ENCODE measurements at regions of chr5 and their contacts with region 1.

Region 1: DNA sequence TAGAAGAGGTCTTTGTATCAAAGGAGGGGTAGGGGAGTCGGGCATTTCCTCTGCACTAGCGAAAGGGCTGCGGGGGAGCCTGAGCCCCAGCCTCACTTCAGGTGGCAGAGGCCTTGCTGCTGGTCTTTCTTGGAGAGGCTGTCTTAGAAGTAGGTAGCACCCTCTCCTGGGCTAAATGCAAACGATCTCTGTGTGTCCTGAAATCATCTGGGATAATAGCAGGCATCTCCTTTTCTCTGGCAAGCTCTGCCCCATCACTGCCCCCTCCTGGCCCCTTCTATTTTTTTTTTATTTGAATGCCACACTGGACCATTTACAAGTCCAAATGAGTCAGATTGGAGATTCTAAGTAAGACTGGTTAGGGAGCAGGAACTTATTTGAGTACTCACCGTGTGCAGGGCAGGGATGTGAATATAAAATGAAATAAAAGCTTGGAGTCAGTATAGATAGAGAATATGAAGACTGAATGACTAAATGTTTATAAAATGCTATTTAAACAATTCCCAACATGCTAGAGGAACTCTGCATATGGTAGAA is 137.1 kb downstream of the FGF1 start:
- DNase-seq: peak; percentile 88
- ATAC-seq: peak; percentile 96
- H3K4me3 ChIP-seq: no peak overlapping the region
- H3K27ac ChIP-seq: no peak overlapping the region
- H3K4me1 ChIP-seq: peaks cover 42% of the 10 kb centered on the region
- H3K27me3 ChIP-seq: no peaks in the 10 kb centered on the region
- CTCF ChIP-seq: peak; percentile 91
- EP300 ChIP-seq: 0 out of 4 replicates have a peak, but pooled peaks of 1 of the 2 experiments have one; percentile 5
- POLR2A ChIP-seq: no peak
- RAD21 ChIP-seq: peak; percentile 93

Region 2: GRCh38 chr5:142151436-142152383 is 397.1 kb before region 1 on chr5:
- CTCF ChIA-PET with region 1: interaction called, 44 read pairs
- POLR2A ChIA-PET with region 1: no interaction called
- in situ Hi-C with region 1: loop called (anchors 5 kb)
- intact Hi-C with region 1: loop called (anchors 1 kb)
- DNase-seq: peak; percentile 48
- ATAC-seq: peak; percentile 53
- H3K4me3 ChIP-seq: no peak overlapping the region
- H3K27ac ChIP-seq: no peak overlapping the region
- H3K4me1 ChIP-seq: peaks cover 25% of the 10 kb centered on the region
- H3K27me3 ChIP-seq: no peaks in the 10 kb centered on the region
- CTCF ChIP-seq: peak; percentile 75
- EP300 ChIP-seq: no peak
- POLR2A ChIP-seq: no peak
- RAD21 ChIP-seq: peak; percentile 73

Region 3: DNA sequence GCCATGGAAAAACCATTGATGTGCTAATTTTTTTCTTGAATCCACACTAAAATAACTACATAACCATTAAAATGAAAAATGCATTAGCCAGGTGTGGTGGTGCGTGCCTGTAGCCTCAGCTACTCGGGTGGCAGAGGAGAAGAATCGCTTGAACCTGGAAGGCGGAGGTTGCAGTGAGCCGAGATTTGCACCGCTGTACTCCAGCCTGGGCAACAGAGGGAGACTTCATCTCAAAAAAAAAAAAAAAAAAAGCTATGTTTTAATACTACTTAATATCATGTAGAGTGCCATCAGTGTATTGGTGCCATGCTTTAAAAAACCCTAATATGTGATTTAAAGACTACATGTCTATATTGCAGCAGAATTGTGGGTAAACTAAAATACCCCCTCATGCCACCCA is 381.3 kb before region 1 on chr5:
- CTCF ChIA-PET with region 1: no interaction called
- POLR2A ChIA-PET with region 1: no interaction called
- in situ Hi-C with region 1: no loop called
- intact Hi-C with region 1: loop called (anchors 5 kb)
- DNase-seq: no peak
- ATAC-seq: no peak
- H3K4me3 ChIP-seq: no peak overlapping the region
- H3K27ac ChIP-seq: no peak overlapping the region
- H3K4me1 ChIP-seq: peaks cover 66% of the 10 kb centered on the region
- H3K27me3 ChIP-seq: no peaks in the 10 kb centered on the region
- CTCF ChIP-seq: no peak
- EP300 ChIP-seq: no peak
- POLR2A ChIP-seq: no peak
- RAD21 ChIP-seq: no peak

Region 4: GRCh38 chr5:142317753-142318152 is 231.1 kb before region 1 on chr5:
- CTCF ChIA-PET with region 1: interaction called, 11 read pairs
- POLR2A ChIA-PET with region 1: no interaction called
- in situ Hi-C with region 1: no loop called
- intact Hi-C with region 1: no loop called
- DNase-seq: no peak
- ATAC-seq: no peak
- H3K4me3 ChIP-seq: no peak overlapping the region
- H3K27ac ChIP-seq: no peak overlapping the region
- H3K4me1 ChIP-seq: peaks cover 86% of the 10 kb centered on the region
- H3K27me3 ChIP-seq: no peaks in the 10 kb centered on the region; a peak in 1 of 5 replicates
- CTCF ChIP-seq: no peak
- EP300 ChIP-seq: no peak
- POLR2A ChIP-seq: no peak
- RAD21 ChIP-seq: peak; percentile 14; the same call in 1 of the 2 replicates

Region 5: GRCh38 chr5:142364251-142365145 is 184.3 kb before region 1 on chr5:
- CTCF ChIA-PET with region 1: no interaction called
- POLR2A ChIA-PET with region 1: interaction called, 3 read pairs
- in situ Hi-C with region 1: no loop called
- intact Hi-C with region 1: loop called (anchors 2 kb)
- DNase-seq: no peak
- ATAC-seq: no peak
- H3K4me3 ChIP-seq: no peak overlapping the region
- H3K27ac ChIP-seq: peak overlapping the region; percentile 82
- H3K4me1 ChIP-seq: peaks cover 53% of the 10 kb centered on the region
- H3K27me3 ChIP-seq: no peaks in the 10 kb centered on the region
- CTCF ChIP-seq: no peak
- EP300 ChIP-seq: no peak
- POLR2A ChIP-seq: no peak
- RAD21 ChIP-seq: no peak